Endothelial cell of umbilical vein (primary cell): ENCODE measurements at regions of chr21 and their contacts with region 1.

Region 1: GRCh38 chr21:42258153-42258884 is 39.4 kb downstream of the ABCG1 start:
- DNase-seq: peak; percentile 49
- H3K4me3 ChIP-seq: no peak overlapping the region
- H3K27ac ChIP-seq: no peak overlapping the region
- H3K4me1 ChIP-seq: peaks cover 13% of the 10 kb centered on the region
- H3K27me3 ChIP-seq: no peaks in the 10 kb centered on the region
- CTCF ChIP-seq: peak; percentile 94 to 96
- POLR2A ChIP-seq: no peak

Region 2: GRCh38 chr21:42145569-42146272 is 112.6 kb before region 1 on chr21:
- CTCF ChIA-PET with region 1: interaction called, 131 read pairs
- POLR2A ChIA-PET with region 1: no interaction called
- dilution Hi-C with region 1: no loop called
- intact Hi-C with region 1: loop called (anchors 1 kb)
- DNase-seq: peak; percentile 42
- H3K4me3 ChIP-seq: no peak overlapping the region
- H3K27ac ChIP-seq: no peak overlapping the region
- H3K4me1 ChIP-seq: no peaks in the 10 kb centered on the region
- H3K27me3 ChIP-seq: peaks cover 0 to 2% of the 10 kb centered on the region in 2 experiments
- CTCF ChIP-seq: peak; percentile 83 to 92
- POLR2A ChIP-seq: no peak

Region 3: DNA sequence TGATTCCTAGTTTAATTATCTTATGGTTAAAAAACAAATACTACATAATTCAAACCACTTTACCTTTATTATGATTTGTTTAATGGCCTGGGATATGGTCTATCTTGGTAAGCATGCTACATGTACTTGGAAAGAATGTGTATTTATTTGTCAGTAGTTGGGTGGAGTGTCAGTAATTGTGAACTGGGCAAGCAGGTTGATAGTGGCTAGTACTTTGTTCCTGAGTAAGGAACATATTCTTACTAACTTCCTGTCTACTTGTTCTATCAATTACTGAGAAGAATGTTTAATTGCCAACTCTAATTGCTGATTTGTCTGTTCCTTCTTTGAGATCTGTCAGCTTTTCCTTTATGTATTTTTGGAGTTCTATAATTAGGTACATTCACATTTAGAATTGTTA is 88.6 kb before region 1 on chr21:
- CTCF ChIA-PET with region 1: interaction called, 108 read pairs
- POLR2A ChIA-PET with region 1: no interaction called
- dilution Hi-C with region 1: no loop called
- intact Hi-C with region 1: loop called (anchors 1 kb)
- DNase-seq: no peak
- H3K4me3 ChIP-seq: no peak overlapping the region
- H3K27ac ChIP-seq: no peak overlapping the region
- H3K4me1 ChIP-seq: no peaks in the 10 kb centered on the region
- H3K27me3 ChIP-seq: no peaks in the 10 kb centered on the region
- CTCF ChIP-seq: no peak
- POLR2A ChIP-seq: no peak

Region 4: GRCh38 chr21:42233067-42233961 is 25.0 kb before region 1 on chr21:
- CTCF ChIA-PET with region 1: interaction called, 37 read pairs
- POLR2A ChIA-PET with region 1: no interaction called
- dilution Hi-C with region 1: no loop called
- intact Hi-C with region 1: loop called (anchors 1 kb)
- DNase-seq: peak; percentile 86
- H3K4me3 ChIP-seq: no peak overlapping the region
- H3K27ac ChIP-seq: peak overlapping the region; percentile 74
- H3K4me1 ChIP-seq: peaks cover 32% of the 10 kb centered on the region
- H3K27me3 ChIP-seq: peaks cover 0 to 5% of the 10 kb centered on the region in 2 experiments
- CTCF ChIP-seq: peak; percentile 37 to 39
- POLR2A ChIP-seq: no peak

Region 5: DNA sequence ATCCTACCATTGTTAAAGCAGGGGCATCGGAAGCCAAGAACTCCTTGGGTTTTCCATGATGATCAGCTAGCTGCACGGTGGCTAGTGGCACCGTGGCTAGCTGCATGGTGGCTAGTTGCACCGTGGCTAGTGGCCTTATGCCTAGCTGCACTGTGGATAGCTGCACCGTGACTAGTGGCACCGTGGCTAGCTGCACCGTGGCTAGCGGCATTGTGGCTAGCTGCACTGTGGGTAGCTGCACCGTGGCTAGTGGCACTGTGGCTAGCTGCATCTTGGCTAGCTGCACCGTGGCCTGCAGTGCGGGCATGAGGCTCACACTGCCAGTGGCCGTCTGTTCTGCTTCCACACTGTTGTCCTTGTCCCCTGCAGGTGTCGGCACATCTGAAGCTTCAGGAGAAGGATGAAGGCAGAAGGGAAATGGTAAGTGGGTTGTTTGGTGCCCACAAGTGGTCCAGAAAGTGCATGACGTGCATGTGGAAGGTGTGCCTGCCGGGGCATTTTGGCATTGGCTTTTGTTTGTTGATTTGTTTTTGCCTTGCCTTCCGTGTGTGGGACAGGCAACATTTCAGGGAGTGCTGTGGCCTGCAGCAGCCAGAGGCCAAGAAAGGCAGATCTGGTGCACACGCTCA is 18.3 kb after region 1 on chr21:
- CTCF ChIA-PET with region 1: interaction called, 33 read pairs
- POLR2A ChIA-PET with region 1: interaction called, 4 read pairs
- dilution Hi-C with region 1: no loop called
- intact Hi-C with region 1: loop called (anchors 1 kb)
- DNase-seq: no peak
- H3K4me3 ChIP-seq: no peak overlapping the region
- H3K27ac ChIP-seq: no peak overlapping the region
- H3K4me1 ChIP-seq: peaks cover 12% of the 10 kb centered on the region
- H3K27me3 ChIP-seq: no peaks in the 10 kb centered on the region
- CTCF ChIP-seq: peak in 1 of 2 donors; percentile 17
- POLR2A ChIP-seq: no peak

Region 6: GRCh38 chr21:42424914-42425541 is 166.7 kb after region 1 on chr21:
- CTCF ChIA-PET with region 1: no interaction called
- POLR2A ChIA-PET with region 1: no interaction called
- dilution Hi-C with region 1: no loop called
- intact Hi-C with region 1: loop called (anchors 1 kb)
- DNase-seq: peak; percentile 44
- H3K4me3 ChIP-seq: no peak overlapping the region
- H3K27ac ChIP-seq: no peak overlapping the region
- H3K4me1 ChIP-seq: peaks cover 12% of the 10 kb centered on the region
- H3K27me3 ChIP-seq: peaks cover 28 to 51% of the 10 kb centered on the region in 2 experiments
- CTCF ChIP-seq: no peak
- POLR2A ChIP-seq: no peak

Region 7: GRCh38 chr21:42496122-42496900 is 238.0 kb after region 1 on chr21 and contains the start of gene RSPH1:
- CTCF ChIA-PET with region 1: no interaction called
- POLR2A ChIA-PET with region 1: no interaction called
- dilution Hi-C with region 1: no loop called
- intact Hi-C with region 1: no loop called
- DNase-seq: peak; percentile 99
- H3K4me3 ChIP-seq: peak within 1 kb of the TSS; percentile 50 to 59 (median 54)
- H3K27ac ChIP-seq: peak within 1 kb of the TSS; percentile 14
- H3K4me1 ChIP-seq: peaks cover 13% of the 10 kb centered on the region
- H3K27me3 ChIP-seq: peaks cover 6 to 7% of the 10 kb centered on the region in 2 experiments
- CTCF ChIP-seq: no peak
- POLR2A ChIP-seq: no peak
- total RNA-seq, gene RSPH1: not detected in 2 replicates

Region 8: DNA sequence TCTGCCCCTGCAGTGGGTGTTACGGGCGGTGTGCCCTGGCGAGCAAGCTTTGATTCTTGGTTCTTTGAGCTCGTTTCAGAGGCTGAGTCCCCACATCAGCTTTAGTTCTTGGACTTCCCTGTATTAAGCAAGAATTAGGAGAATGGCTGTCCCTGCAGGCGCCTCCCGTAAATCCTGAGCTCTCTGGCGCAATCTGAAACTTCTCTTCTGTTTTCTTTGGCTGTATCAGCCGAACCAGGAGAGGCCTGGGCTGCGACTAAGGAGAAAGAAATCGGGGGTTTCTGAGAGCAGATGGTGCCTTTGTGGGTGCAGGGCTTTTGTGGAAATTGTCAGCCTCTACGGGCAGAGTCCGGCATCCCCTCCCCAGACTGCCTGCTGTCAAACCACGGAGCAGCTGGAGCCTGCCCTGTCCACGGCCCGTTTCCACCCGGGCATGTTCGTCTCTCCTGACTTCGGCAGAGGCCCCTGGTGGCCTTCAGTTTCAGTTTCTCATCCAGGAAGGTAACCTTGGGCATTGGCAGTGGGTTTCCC is 1499.9 kb after region 1 on chr21:
- CTCF ChIA-PET with region 1: no interaction called
- POLR2A ChIA-PET with region 1: no interaction called
- dilution Hi-C with region 1: no loop called
- intact Hi-C with region 1: no loop called
- DNase-seq: no peak
- H3K4me3 ChIP-seq: no peak overlapping the region
- H3K27ac ChIP-seq: no peak overlapping the region
- H3K4me1 ChIP-seq: no peaks in the 10 kb centered on the region
- H3K27me3 ChIP-seq: no peaks in the 10 kb centered on the region
- CTCF ChIP-seq: no peak
- POLR2A ChIP-seq: no peak